ENCODE measurements at regions of chr3 and their contacts with region 1.

Region 1: GRCh38 chr3:49411968-49412631 is at the starts of genes RHOA and TCTA:
- DNase-seq: peak; percentile 100
- ATAC-seq: peak; percentile 93 to 96
- H3K4me3 ChIP-seq: peak within 1 kb of the TSS; percentile 74 to 97 (median 80)
- H3K27ac ChIP-seq: peak within 1 kb of the TSS; percentile 85 to 96 (median 92)
- H3K4me1 ChIP-seq: peaks cover 48 to 55% of the 10 kb centered on the region in 2 donors
- H3K27me3 ChIP-seq: no peaks in the 10 kb centered on the region
- CTCF ChIP-seq: peak in 1 of 5 experiments; percentile 24
- POLR2A ChIP-seq: peak; percentile 98 to 99
- total RNA-seq, gene RHOA: 244 to 411 (median 282) TPM
- total RNA-seq, gene TCTA: 12.0 to 25.8 (median 15.1) TPM

Region 2: DNA sequence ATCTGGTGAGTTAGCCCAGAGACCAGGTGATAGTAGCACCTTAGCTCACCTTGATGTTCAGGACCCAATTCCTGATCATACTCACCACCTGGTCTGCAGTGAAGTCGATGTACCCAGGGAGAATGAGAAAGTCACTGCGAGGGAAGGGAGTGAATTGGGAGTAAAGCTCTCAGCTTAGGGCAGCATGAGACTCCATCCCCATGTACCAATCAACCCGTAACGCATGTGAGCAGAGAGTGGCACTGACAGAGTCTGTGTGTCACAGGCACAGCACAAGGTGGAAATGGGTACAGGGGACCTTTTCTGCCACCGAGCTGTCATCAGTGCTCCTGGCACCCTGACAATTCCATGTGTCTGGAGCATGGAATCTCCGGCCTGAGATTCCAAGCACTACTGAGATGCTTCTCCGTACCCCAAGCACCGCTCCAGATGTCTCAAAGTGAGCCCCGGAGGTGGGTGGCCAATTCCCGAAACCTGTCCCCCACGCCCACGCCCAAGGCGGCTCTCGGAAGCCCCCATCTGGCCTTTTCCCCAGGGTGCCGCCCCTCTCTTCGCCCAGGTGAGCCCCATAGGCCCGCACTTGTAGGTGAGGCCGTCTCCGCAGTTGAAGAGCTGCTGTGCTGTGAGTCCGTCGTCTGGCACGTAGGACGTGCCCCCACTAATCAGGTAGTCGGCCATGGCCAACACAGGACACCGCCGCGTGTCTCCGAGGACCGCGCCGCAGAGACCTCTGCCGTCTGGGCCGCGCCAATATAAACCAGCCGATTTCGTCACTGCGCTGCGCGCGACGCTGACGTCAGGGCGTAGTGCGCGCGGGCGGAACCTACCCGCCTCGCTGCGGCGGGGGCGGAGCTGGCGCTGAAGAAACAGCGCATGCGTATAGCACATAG is 383.2 kb before region 1 on chr3 and contains the start of gene IMPDH2:
- in situ Hi-C with region 1: no loop called
- intact Hi-C with region 1: no loop called
- DNase-seq: peak; percentile 83 to 92
- ATAC-seq: peak; percentile 94
- H3K4me3 ChIP-seq: peak within 1 kb of the TSS; percentile 70 to 86 (median 86)
- H3K27ac ChIP-seq: peak within 1 kb of the TSS; percentile 94 to 98 (median 96)
- H3K4me1 ChIP-seq: peaks cover 22 to 31% of the 10 kb centered on the region in 2 donors
- H3K27me3 ChIP-seq: no peaks in the 10 kb centered on the region
- CTCF ChIP-seq: peak in 2 of 5 experiments; percentile 21 to 23
- POLR2A ChIP-seq: peak; percentile 98
- total RNA-seq, gene IMPDH2: 178 to 229 (median 205) TPM

Region 3: GRCh38 chr3:49358217-49358883 is 53.8 kb before region 1 on chr3 and contains the start of gene GPX1:
- in situ Hi-C with region 1: no loop called
- intact Hi-C with region 1: loop called (anchors 2 kb)
- DNase-seq: peak; percentile 85 to 93
- ATAC-seq: peak; percentile 84 to 89
- H3K4me3 ChIP-seq: peak within 1 kb of the TSS; percentile 73 to 77 (median 73)
- H3K27ac ChIP-seq: peak within 1 kb of the TSS; percentile 85 to 91 (median 86)
- H3K4me1 ChIP-seq: peaks cover 14 to 16% of the 10 kb centered on the region in 2 donors
- H3K27me3 ChIP-seq: no peaks in the 10 kb centered on the region
- CTCF ChIP-seq: no peak
- POLR2A ChIP-seq: peak; percentile 84 to 93
- total RNA-seq, gene GPX1: 75.2 to 157 (median 123) TPM

Region 4: DNA sequence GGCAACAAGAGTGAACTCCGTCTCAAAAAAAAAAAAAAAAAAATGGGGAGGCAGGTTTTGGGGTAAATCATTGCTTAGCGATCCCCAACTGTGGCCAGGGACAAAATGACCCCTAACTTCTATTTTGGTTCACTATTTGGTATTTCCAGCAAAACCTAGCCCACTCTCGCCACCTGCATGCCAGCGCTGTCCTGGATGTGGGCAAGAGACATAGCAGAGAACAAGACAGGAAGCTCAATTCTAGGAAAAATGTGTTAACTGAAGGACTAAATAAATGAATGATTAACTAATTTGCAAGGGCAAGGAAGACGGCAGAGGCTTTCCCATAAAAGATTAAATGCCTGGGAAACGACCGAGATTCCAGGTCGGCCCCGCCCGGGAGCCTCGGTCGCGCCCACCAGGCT is 16.6 kb after region 1 on chr3:
- in situ Hi-C with region 1: no loop called
- intact Hi-C with region 1: loop called (anchors 1 kb)
- DNase-seq: no peak
- ATAC-seq: peak in 1 of 2 donors; percentile 5
- H3K4me3 ChIP-seq: peak overlapping the region; percentile 64 to 86 (median 74)
- H3K27ac ChIP-seq: peak overlapping the region; percentile 82 to 93 (median 92)
- H3K4me1 ChIP-seq: peaks cover 7 to 12% of the 10 kb centered on the region in 2 donors
- H3K27me3 ChIP-seq: no peaks in the 10 kb centered on the region
- CTCF ChIP-seq: no peak
- POLR2A ChIP-seq: no peak

Region 5: GRCh38 chr3:49469936-49470713 is 58.0 kb after region 1 on chr3 and contains the start of gene DAG1:
- in situ Hi-C with region 1: no loop called
- intact Hi-C with region 1: loop called (anchors 5 kb)
- DNase-seq: peak; percentile 96 to 99
- ATAC-seq: peak; percentile 73 to 78
- H3K4me3 ChIP-seq: peak within 1 kb of the TSS; percentile 62 to 78 (median 71)
- H3K27ac ChIP-seq: peak within 1 kb of the TSS; percentile 96 to 99 (median 98)
- H3K4me1 ChIP-seq: peaks cover 38 to 39% of the 10 kb centered on the region in 2 donors
- H3K27me3 ChIP-seq: no peaks in the 10 kb centered on the region
- CTCF ChIP-seq: peak in 3 of 5 experiments; percentile 7 to 15 (median 8)
- POLR2A ChIP-seq: peak; percentile 96 to 99
- total RNA-seq, gene DAG1: 95.0 to 177 (median 109) TPM

Region 6: DNA sequence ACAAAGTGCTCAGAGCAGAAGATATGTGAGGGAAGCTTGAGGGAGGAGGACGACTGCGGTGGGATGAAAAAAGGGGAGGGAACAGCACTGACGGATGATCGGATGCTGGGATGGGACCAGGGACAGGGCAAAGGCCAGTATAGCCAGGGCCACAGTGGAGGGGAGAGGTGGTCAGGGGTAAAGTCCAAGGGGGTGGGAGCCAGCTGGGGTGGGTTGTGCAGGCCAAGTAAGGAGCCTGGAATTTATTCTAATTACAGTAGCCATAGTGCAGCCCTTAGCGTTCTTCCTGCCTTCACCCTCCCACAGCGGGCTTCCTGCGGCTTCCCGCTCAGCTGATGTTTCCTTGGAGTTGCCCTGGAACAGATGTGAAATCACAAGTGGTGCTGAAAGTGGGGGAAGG is 254.5 kb after region 1 on chr3:
- in situ Hi-C with region 1: no loop called
- intact Hi-C with region 1: no loop called
- DNase-seq: no peak
- ATAC-seq: no peak
- H3K4me3 ChIP-seq: no peak overlapping the region
- H3K27ac ChIP-seq: no peak overlapping the region
- H3K4me1 ChIP-seq: no peaks in the 10 kb centered on the region
- H3K27me3 ChIP-seq: peaks cover 0 to 3% (median 0%) of the 10 kb centered on the region in 3 donors
- CTCF ChIP-seq: no peak
- POLR2A ChIP-seq: no peak

Measured in gastrocnemius medialis (tissue), 4 donors.